ENCODE measurements at regions of chr12 and their contacts with region 1.

Region 1: DNA sequence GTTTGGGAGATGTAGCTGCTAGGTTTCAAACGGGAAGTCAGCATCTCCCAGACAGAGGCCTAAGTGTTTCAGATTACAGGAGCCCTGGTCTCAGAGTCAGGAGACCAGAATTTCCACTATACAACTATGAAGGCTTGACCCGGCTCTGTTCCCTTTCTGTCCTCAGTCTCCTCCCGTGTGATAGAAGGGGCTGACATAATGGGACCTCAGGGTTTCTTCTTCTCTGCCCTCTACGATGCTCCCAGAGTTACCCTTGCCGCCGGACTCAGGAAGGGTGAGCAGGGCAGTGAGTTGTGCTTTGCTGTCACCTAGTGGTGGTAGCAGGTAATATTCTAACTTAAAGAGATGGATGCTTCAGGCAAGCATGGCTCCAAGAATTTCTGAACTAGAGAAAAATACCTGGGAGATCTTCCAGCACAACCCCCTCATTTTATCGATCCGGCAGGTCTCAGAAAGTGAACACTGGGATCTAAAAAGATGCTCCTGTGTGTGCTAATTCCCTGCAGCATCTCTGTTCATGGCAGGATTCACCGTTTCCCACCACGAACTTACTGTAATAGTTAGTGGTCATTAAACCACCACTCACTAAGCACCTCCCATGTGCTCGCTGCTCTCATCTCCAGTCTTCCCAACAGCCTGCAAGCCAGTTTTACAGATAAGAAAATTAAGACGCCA is 84.4 kb downstream of the VWF start:
- DNase-seq: peak; percentile 83
- H3K4me3 ChIP-seq: no peak overlapping the region; a peak in 1 of 4 replicates
- H3K27ac ChIP-seq: no peak overlapping the region; a peak in 1 of 4 replicates
- H3K4me1 ChIP-seq: peaks cover 0 to 12% of the 10 kb centered on the region in 2 experiments; a peak in 1 of 4 replicates
- H3K27me3 ChIP-seq: no peaks in the 10 kb centered on the region
- CTCF ChIP-seq: peak; percentile 90
- EP300 ChIP-seq: no peak
- RAD21 ChIP-seq: peak; percentile 98

Region 2: GRCh38 chr12:5965950-5966383 is 74.1 kb before region 1 on chr12:
- CTCF ChIA-PET with region 1: interaction called, 31 read pairs
- POLR2A ChIA-PET with region 1: no interaction called
- DNase-seq: peak; percentile 80
- H3K4me3 ChIP-seq: no peak overlapping the region
- H3K27ac ChIP-seq: no peak overlapping the region
- H3K4me1 ChIP-seq: no peaks in the 10 kb centered on the region; a peak in 1 of 4 replicates
- H3K27me3 ChIP-seq: peaks cover 7% of the 10 kb centered on the region; the same call in 1 of the 2 replicates
- CTCF ChIP-seq: peak; percentile 88
- EP300 ChIP-seq: no peak
- RAD21 ChIP-seq: peak; percentile 57

Region 3: GRCh38 chr12:5982106-5982505 is 57.9 kb before region 1 on chr12:
- CTCF ChIA-PET with region 1: interaction called, 15 read pairs
- POLR2A ChIA-PET with region 1: no interaction called
- DNase-seq: no peak
- H3K4me3 ChIP-seq: no peak overlapping the region
- H3K27ac ChIP-seq: no peak overlapping the region
- H3K4me1 ChIP-seq: no peaks in the 10 kb centered on the region
- H3K27me3 ChIP-seq: no peaks in the 10 kb centered on the region; the same call in 1 of the 2 replicates
- CTCF ChIP-seq: no peak
- EP300 ChIP-seq: no peak
- RAD21 ChIP-seq: no peak

Region 4: GRCh38 chr12:6084261-6084968 is 44.4 kb after region 1 on chr12:
- CTCF ChIA-PET with region 1: no interaction called
- POLR2A ChIA-PET with region 1: no interaction called
- DNase-seq: peak; percentile 85
- H3K4me3 ChIP-seq: no peak overlapping the region
- H3K27ac ChIP-seq: peak overlapping the region; percentile 50 to 98
- H3K4me1 ChIP-seq: peaks cover 27 to 56% of the 10 kb centered on the region in 2 experiments; a peak in 3 of 4 replicates
- H3K27me3 ChIP-seq: no peaks in the 10 kb centered on the region
- CTCF ChIP-seq: no peak
- EP300 ChIP-seq: peak in 1 of 2 experiments; percentile 95; a peak in 3 of 4 replicates
- RAD21 ChIP-seq: peak; percentile 34

Region 5: GRCh38 chr12:6140651-6141447 is 100.8 kb after region 1 on chr12:
- CTCF ChIA-PET with region 1: no interaction called
- POLR2A ChIA-PET with region 1: no interaction called
- DNase-seq: no peak
- H3K4me3 ChIP-seq: no peak overlapping the region
- H3K27ac ChIP-seq: no peak overlapping the region
- H3K4me1 ChIP-seq: peaks cover 0 to 2% of the 10 kb centered on the region in 2 experiments; a peak in 1 of 4 replicates
- H3K27me3 ChIP-seq: no peaks in the 10 kb centered on the region
- CTCF ChIP-seq: no peak
- EP300 ChIP-seq: no peak
- RAD21 ChIP-seq: no peak

Region 6: GRCh38 chr12:6927379-6928024 is 887.5 kb after region 1 on chr12 and contains the start of gene ATN1:
- CTCF ChIA-PET with region 1: no interaction called
- POLR2A ChIA-PET with region 1: no interaction called
- DNase-seq: peak; percentile 91
- H3K4me3 ChIP-seq: peak within 1 kb of the TSS; percentile 82 to 87
- H3K27ac ChIP-seq: peak within 1 kb of the TSS; percentile 76 to 90
- H3K4me1 ChIP-seq: peaks cover 37 to 38% of the 10 kb centered on the region in 2 experiments
- H3K27me3 ChIP-seq: no peaks in the 10 kb centered on the region
- CTCF ChIP-seq: no peak
- EP300 ChIP-seq: peak; percentile 16 to 38; a peak in 2 of 4 replicates
- RAD21 ChIP-seq: no peak
- polyA plus RNA-seq, gene ATN1: 18.5 and 29.3 TPM in 2 replicates